ENCODE measurements at regions of chr14 and their contacts with region 1.

Region 1: GRCh38 chr14:81211844-81212243 is 8.9 kb downstream of the GTF2A1 start:
- DNase-seq: peak in 1 of 2 donors; percentile 24
- H3K4me3 ChIP-seq: no peak overlapping the region
- H3K27ac ChIP-seq: no peak overlapping the region
- H3K4me1 ChIP-seq: peaks cover 0 to 36% (median 10%) of the 10 kb centered on the region in 4 donors
- H3K27me3 ChIP-seq: no peaks in the 10 kb centered on the region
- CTCF ChIP-seq: peak; percentile 25 to 26

Region 2: GRCh38 chr14:79842270-79842669 is 1369.6 kb before region 1 on chr14:
- intact Hi-C with region 1: loop called (anchors 5 kb)
- DNase-seq: peak; percentile 60 to 74
- H3K4me3 ChIP-seq: no peak overlapping the region
- H3K27ac ChIP-seq: no peak overlapping the region
- H3K4me1 ChIP-seq: peaks cover 0 to 13% (median 0%) of the 10 kb centered on the region in 4 donors
- H3K27me3 ChIP-seq: no peaks in the 10 kb centered on the region
- CTCF ChIP-seq: no peak

Region 3: DNA sequence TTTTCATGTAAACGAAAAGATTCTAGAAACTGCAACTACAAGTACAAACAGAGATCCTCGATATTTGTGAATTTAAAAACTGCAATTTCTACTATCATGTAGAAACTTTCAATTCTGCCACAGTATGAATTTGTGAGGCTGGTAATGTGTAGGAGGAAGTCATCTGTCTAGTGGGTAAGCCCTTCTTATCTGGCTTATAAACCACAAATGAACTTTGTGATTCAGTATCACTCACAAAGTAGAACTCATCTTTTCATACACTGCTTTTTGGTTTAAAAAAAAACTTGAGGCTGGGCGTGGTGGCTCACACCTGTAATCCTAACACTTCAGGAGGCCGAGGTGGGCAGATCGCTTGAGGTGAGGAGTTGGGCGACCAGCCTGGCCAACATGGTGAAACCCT is 11.8 kb before region 1 on chr14:
- intact Hi-C with region 1: no loop called
- DNase-seq: no peak
- H3K4me3 ChIP-seq: no peak overlapping the region
- H3K27ac ChIP-seq: no peak overlapping the region
- H3K4me1 ChIP-seq: peaks cover 0 to 12% (median 0%) of the 10 kb centered on the region in 4 donors
- H3K27me3 ChIP-seq: no peaks in the 10 kb centered on the region
- CTCF ChIP-seq: no peak

Measured in tibial artery (tissue), 4 donors.